Activated CD4-positive, alpha-beta T cell treated with anti-CD3 and anti-CD28 coated beads, Interleukin-2, amount 10 ng/mL, durations not matched to agents 7 days and 5 days (primary cell): ENCODE measurements at regions of chr7 and their contacts with region 1.

Region 1: DNA sequence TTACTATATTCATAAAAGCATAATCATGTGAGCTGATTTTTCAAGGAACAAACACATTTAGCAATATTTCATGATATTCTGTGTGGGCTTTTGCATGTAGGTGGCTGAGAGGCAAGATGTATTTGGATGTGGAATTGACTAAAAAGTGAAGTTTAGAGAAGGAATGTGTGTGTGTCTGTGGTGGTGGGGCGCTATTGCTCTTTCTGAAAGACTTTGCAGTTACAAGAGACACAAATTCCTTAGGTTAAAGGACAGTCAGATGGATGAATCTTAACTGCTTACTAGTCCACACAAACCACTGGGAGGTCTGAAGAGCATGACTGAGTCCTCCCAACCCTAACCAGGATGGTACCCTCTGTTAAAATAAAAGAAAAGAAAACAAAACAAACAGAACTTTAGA is 200.1 kb downstream of the SDHAF3 start:
- DNase-seq: no peak
- H3K4me3 Mint-ChIP-seq: no peak overlapping the region
- H3K27ac Mint-ChIP-seq: no peak overlapping the region
- H3K4me1 Mint-ChIP-seq: no peaks in the 10 kb centered on the region
- H3K27me3 Mint-ChIP-seq: no peaks in the 10 kb centered on the region

Region 2: GRCh38 chr7:95874541-95875265 is 1442.9 kb before region 1 on chr7:
- CTCF ChIA-PET with region 1: no interaction called
- POLR2A ChIA-PET with region 1: interaction called, 17 read pairs
- DNase-seq: no peak
- H3K4me3 Mint-ChIP-seq: no peak overlapping the region
- H3K27ac Mint-ChIP-seq: no peak overlapping the region
- H3K4me1 Mint-ChIP-seq: no peaks in the 10 kb centered on the region
- H3K27me3 Mint-ChIP-seq: peaks cover 4% of the 10 kb centered on the region

Region 3: DNA sequence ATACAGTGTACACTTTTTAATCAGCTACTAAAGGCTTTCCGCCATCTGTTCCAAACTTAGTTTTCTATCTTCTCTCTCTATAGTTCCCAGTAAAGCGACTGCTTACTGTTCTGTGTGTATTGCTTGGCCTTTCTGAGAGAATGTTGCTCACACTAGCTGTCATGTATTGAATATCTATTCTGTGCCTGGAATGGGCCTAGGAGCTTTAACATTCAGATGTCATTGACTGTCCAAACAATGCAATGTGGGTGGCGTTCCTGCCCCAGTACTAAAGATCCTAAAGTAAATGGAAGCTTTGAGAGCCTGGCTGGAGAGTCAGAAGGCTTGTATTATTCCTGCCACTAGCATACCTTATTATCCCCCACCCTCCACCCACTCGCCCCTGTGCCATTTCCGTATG is 36.6 kb before region 1 on chr7:
- CTCF ChIA-PET with region 1: no interaction called
- POLR2A ChIA-PET with region 1: no interaction called
- DNase-seq: no peak
- H3K4me3 Mint-ChIP-seq: no peak overlapping the region
- H3K27ac Mint-ChIP-seq: no peak overlapping the region
- H3K4me1 Mint-ChIP-seq: no peaks in the 10 kb centered on the region
- H3K27me3 Mint-ChIP-seq: no peaks in the 10 kb centered on the region